ENCODE measurements at regions of chr6 and their contacts with region 1.

Region 1: DNA sequence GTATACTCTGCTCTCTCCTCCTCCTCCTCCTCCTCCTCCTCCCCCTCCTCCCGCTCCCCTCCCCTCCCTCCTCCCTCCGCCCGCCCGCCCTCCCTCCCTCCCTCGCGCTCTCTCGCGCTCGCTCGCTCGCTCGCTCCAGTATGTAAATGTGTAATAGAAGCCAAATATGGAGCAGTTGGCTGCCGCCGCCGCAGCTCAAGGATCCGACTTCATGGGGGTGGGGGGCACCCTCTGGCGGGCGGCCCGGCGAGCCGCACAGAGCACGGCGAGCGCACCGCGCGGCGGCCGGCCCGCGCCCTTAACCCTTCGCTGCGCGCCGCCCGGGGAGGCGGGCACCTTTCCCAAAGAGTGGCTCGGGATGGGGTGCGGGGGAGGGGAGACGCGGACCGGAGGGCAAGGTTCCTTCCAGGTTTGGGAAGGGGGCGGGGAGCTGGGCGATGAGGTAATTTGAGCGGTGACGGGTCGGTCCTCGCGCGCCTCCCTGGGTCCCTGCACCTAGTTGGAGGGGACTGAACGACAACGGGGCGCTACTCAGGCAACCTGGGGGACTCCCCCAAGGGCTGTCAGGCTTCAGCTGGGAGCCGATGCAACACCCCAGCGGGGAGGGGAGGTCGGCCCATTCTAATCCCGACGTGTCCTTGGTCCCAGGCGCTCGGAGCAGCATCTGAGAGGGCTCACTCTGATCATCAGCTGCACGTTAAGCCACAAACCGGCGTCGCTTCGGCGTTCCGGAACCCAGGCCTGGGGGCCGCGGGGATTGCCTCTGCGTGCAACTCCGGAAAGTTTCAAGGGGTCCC is 409 bp upstream of the ATXN1 start:
- DNase-seq: peak; percentile 80 to 86 (median 85)
- H3K4me3 ChIP-seq: peak overlapping the region; percentile 67 to 98 (median 92)
- H3K4me3 Mint-ChIP-seq: peak overlapping the region; percentile 97
- H3K27ac ChIP-seq: peak overlapping the region; percentile 88 to 98
- H3K27ac Mint-ChIP-seq: peak overlapping the region; percentile 94 to 99 (median 97)
- H3K4me1 ChIP-seq: peaks cover 35 to 43% of the 10 kb centered on the region in 2 donors
- H3K4me1 Mint-ChIP-seq: peaks cover 34% of the 10 kb centered on the region
- H3K27me3 ChIP-seq: no peaks in the 10 kb centered on the region
- H3K27me3 Mint-ChIP-seq: no peaks in the 10 kb centered on the region
- CTCF ChIP-seq: peak; percentile 17

Region 2: GRCh38 chr6:16503970-16504415 is 257.7 kb before region 1 on chr6:
- intact Hi-C with region 1: loop called in 1 of 2 experiments (anchors 10 kb)
- DNase-seq: no peak
- H3K4me3 ChIP-seq: no peak overlapping the region
- H3K4me3 Mint-ChIP-seq: no peak overlapping the region
- H3K27ac ChIP-seq: no peak overlapping the region
- H3K27ac Mint-ChIP-seq: no peak overlapping the region
- H3K4me1 ChIP-seq: peaks cover 24 to 29% of the 10 kb centered on the region in 2 donors
- H3K4me1 Mint-ChIP-seq: peaks cover 28% of the 10 kb centered on the region
- H3K27me3 ChIP-seq: no peaks in the 10 kb centered on the region
- H3K27me3 Mint-ChIP-seq: peaks cover 0 to 5% (median 0%) of the 10 kb centered on the region in 3 donors
- CTCF ChIP-seq: no peak

Region 3: GRCh38 chr6:16585805-16586204 is 175.9 kb before region 1 on chr6:
- intact Hi-C with region 1: loop called (anchors 5 to 10 kb)
- DNase-seq: peak; percentile 78 to 87 (median 80)
- H3K4me3 ChIP-seq: peak overlapping the region; percentile 54 to 98 (median 74)
- H3K4me3 Mint-ChIP-seq: peak overlapping the region; percentile 80 to 92
- H3K27ac ChIP-seq: peak overlapping the region; percentile 80 to 90
- H3K27ac Mint-ChIP-seq: peak overlapping the region; percentile 92 to 97 (median 94)
- H3K4me1 ChIP-seq: peaks cover 34 to 44% of the 10 kb centered on the region in 2 donors
- H3K4me1 Mint-ChIP-seq: peaks cover 39% of the 10 kb centered on the region
- H3K27me3 ChIP-seq: no peaks in the 10 kb centered on the region
- H3K27me3 Mint-ChIP-seq: peaks cover 0 to 2% (median 0%) of the 10 kb centered on the region in 3 donors
- CTCF ChIP-seq: no peak

Region 4: GRCh38 chr6:16591396-16592222 is 170.1 kb before region 1 on chr6:
- intact Hi-C with region 1: loop called (anchors 5 to 10 kb)
- DNase-seq: peak; percentile 14 to 58 (median 55)
- H3K4me3 ChIP-seq: peak overlapping the region in 2 of 3 experiments; percentile 29 to 41
- H3K4me3 Mint-ChIP-seq: peak overlapping the region; percentile 70 to 77
- H3K27ac ChIP-seq: peak overlapping the region; percentile 74 to 84
- H3K27ac Mint-ChIP-seq: peak overlapping the region; percentile 89 to 96 (median 91)
- H3K4me1 ChIP-seq: peaks cover 55 to 65% of the 10 kb centered on the region in 2 donors
- H3K4me1 Mint-ChIP-seq: peaks cover 63% of the 10 kb centered on the region
- H3K27me3 ChIP-seq: no peaks in the 10 kb centered on the region
- H3K27me3 Mint-ChIP-seq: no peaks in the 10 kb centered on the region
- CTCF ChIP-seq: no peak

Region 5: DNA sequence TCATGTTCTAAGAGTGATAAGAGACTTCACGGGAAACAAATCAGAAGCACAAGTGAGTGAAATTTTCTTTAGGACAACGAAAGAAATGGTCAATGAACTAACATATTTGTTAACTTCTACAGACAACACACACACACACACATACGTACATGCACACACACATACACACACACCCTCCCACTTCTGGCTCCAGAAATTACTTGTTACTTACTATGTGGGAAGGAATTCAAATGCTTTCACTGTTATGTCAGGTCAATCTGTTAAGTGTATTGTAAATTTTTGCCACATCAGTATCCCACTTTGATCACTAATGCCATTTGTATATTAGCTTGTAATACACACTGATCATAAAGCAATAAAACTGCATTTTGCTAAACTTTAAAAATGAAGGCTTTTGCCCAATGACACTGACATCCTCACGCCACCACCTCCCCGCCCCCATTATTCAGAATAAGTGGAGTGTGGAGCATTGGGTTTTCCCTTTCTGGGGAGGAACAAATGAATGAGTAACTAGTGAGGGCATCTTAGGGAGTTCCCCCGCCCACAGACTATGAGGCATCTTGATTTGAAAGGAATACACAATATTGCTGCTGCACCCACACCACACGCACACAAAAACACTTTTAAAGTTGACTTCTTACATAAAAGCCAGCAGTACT is 76.6 kb before region 1 on chr6:
- intact Hi-C with region 1: loop called (anchors 10 kb)
- DNase-seq: peak; percentile 71 to 94 (median 85)
- H3K4me3 ChIP-seq: no peak overlapping the region
- H3K4me3 Mint-ChIP-seq: no peak overlapping the region
- H3K27ac ChIP-seq: peak overlapping the region in 1 of 2 donors; percentile 92
- H3K27ac Mint-ChIP-seq: peak overlapping the region; percentile 66 to 98 (median 85)
- H3K4me1 ChIP-seq: peaks cover 88 to 91% of the 10 kb centered on the region in 2 donors
- H3K4me1 Mint-ChIP-seq: peaks cover 86% of the 10 kb centered on the region
- H3K27me3 ChIP-seq: no peaks in the 10 kb centered on the region
- H3K27me3 Mint-ChIP-seq: no peaks in the 10 kb centered on the region
- CTCF ChIP-seq: no peak

Region 6: DNA sequence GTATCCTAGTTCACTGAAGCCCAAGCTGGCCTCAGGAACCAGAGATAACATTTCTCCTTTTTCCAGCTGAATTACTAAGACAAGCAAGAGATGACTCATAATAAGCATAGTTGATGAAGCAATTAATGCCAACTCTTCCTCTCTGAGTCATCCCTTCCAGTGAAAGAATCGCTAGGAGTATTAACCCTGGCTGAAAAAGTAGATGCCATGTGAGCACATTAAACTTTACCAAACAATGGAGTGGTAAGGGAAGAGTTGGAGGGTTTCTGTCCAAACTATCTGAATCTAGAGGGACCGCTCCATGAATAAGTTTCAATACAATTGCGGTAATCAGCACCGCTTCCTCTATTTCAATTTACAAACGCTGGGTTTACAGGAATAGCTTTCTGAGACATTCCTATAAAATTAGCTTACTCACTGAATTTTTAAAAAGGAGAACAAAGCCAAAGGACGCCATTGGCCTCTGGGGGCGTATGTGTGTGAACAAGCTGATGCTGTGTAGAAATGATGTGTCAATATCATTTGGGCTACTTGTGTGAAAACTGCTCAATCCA is 48.7 kb before region 1 on chr6:
- intact Hi-C with region 1: loop called in 1 of 2 experiments (anchors 2 kb)
- DNase-seq: peak; percentile 88 to 98 (median 95)
- H3K4me3 ChIP-seq: peak overlapping the region; percentile 12 to 63 (median 63)
- H3K4me3 Mint-ChIP-seq: peak overlapping the region in 1 of 2 donors; percentile 80
- H3K27ac ChIP-seq: peak overlapping the region; percentile 87 to 97
- H3K27ac Mint-ChIP-seq: peak overlapping the region; percentile 96 to 99 (median 98)
- H3K4me1 ChIP-seq: peaks cover 44 to 54% of the 10 kb centered on the region in 2 donors
- H3K4me1 Mint-ChIP-seq: peaks cover 58% of the 10 kb centered on the region
- H3K27me3 ChIP-seq: no peaks in the 10 kb centered on the region
- H3K27me3 Mint-ChIP-seq: peaks cover 0 to 2% (median 0%) of the 10 kb centered on the region in 3 donors
- CTCF ChIP-seq: peak; percentile 60

Region 7: GRCh38 chr6:16747232-16748024 is 14.2 kb before region 1 on chr6:
- intact Hi-C with region 1: no loop called
- DNase-seq: peak in 2 of 3 donors; percentile 15 to 68
- H3K4me3 ChIP-seq: no peak overlapping the region
- H3K4me3 Mint-ChIP-seq: no peak overlapping the region
- H3K27ac ChIP-seq: no peak overlapping the region
- H3K27ac Mint-ChIP-seq: peak overlapping the region in 1 of 7 donors; percentile 46
- H3K4me1 ChIP-seq: peaks cover 26 to 40% of the 10 kb centered on the region in 2 donors
- H3K4me1 Mint-ChIP-seq: peaks cover 52% of the 10 kb centered on the region
- H3K27me3 ChIP-seq: no peaks in the 10 kb centered on the region
- H3K27me3 Mint-ChIP-seq: peaks cover 0 to 2% (median 0%) of the 10 kb centered on the region in 3 donors
- CTCF ChIP-seq: no peak